Calu3 (cell line): ENCODE measurements at regions of chr12 and their contacts with region 1.

Region 1: GRCh38 chr12:80598004-80598606 is 109.3 kb upstream of the MYF6 start:
- DNase-seq: peak; percentile 56
- H3K4me3 Mint-ChIP-seq: no peak overlapping the region
- H3K27ac Mint-ChIP-seq: no peak overlapping the region
- H3K4me1 Mint-ChIP-seq: no peaks in the 10 kb centered on the region
- H3K27me3 Mint-ChIP-seq: no peaks in the 10 kb centered on the region
- CTCF ChIP-seq: peak; percentile 26

Region 2: GRCh38 chr12:80313209-80313608 is 284.9 kb before region 1 on chr12:
- CTCF ChIA-PET with region 1: no interaction called
- intact Hi-C with region 1: loop called (anchors 10 kb)
- DNase-seq: no peak
- H3K4me3 Mint-ChIP-seq: no peak overlapping the region
- H3K27ac Mint-ChIP-seq: no peak overlapping the region
- H3K4me1 Mint-ChIP-seq: peaks cover 10% of the 10 kb centered on the region
- H3K27me3 Mint-ChIP-seq: no peaks in the 10 kb centered on the region
- CTCF ChIP-seq: no peak

Region 3: DNA sequence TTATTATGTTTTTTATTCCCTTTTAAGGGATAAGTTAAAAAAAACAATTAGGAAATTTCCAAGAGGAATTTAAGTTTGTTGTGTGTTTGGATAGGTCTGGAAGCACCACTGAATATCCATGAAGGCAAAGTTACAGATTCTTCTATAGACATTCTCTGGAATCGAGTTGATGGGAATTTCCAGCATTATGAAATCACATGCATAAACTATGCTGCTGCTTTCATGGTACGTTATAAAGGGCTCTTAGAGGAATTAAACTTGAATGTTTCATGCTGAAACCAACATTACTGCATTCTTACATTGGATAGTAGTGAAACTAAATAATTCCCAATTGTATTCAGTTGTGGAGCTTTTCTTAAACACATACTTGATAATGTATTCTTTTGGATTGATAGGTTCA is 175.6 kb before region 1 on chr12:
- CTCF ChIA-PET with region 1: no interaction called
- intact Hi-C with region 1: loop called (anchors 5 kb)
- DNase-seq: no peak
- H3K4me3 Mint-ChIP-seq: no peak overlapping the region
- H3K27ac Mint-ChIP-seq: no peak overlapping the region
- H3K4me1 Mint-ChIP-seq: no peaks in the 10 kb centered on the region
- H3K27me3 Mint-ChIP-seq: no peaks in the 10 kb centered on the region
- CTCF ChIP-seq: no peak

Region 4: DNA sequence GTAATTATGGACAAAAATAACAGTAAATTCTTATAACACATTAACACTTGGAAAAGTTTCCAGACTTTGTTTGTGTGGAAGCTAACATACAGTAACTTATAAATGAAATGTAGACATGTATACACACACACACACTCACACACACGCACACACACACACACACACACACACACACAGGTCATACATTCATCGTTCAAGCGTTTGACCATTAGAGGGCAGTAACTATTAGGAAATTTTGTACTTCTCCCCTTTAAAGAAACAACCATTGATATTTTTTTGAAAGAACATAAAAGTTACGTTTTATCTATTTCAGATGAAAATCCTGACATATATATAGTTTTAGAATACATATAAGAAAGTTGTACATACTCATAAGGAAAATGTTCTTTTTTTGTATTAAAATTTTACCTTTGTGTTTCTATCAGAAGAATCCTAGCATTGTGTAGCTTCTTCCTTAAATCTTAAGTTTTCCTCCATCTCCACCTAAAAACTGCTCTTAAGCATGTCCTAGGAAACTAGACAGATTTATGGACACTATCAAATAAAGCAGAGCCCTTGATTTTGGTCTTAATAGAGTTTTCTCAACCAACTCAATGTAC is 125.1 kb before region 1 on chr12:
- CTCF ChIA-PET with region 1: interaction called, 5 read pairs
- intact Hi-C with region 1: loop called (anchors 1 kb)
- DNase-seq: peak; percentile 49
- H3K4me3 Mint-ChIP-seq: no peak overlapping the region
- H3K27ac Mint-ChIP-seq: no peak overlapping the region
- H3K4me1 Mint-ChIP-seq: no peaks in the 10 kb centered on the region
- H3K27me3 Mint-ChIP-seq: no peaks in the 10 kb centered on the region
- CTCF ChIP-seq: peak; percentile 30

Region 5: DNA sequence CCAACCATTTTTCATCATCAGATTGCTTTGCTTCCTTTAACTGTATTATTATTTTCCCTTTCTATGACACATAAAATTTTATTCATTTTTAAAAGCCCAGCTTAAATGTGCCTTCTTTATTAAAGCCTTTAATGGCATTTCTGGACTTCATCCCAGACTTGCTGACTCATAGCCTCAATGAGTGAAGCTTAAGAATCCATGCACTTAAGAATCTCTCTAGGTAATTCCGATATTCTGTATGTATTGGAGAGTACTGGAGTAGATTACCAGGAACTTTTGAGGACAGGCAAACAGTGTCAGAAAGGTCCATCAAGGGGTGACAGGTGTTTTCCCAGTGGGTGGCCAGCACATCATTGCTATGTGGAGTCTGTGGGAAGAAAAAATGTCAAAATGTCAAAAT is 46.2 kb before region 1 on chr12:
- CTCF ChIA-PET with region 1: no interaction called
- intact Hi-C with region 1: loop called (anchors 5 kb)
- DNase-seq: peak; percentile 38
- H3K4me3 Mint-ChIP-seq: no peak overlapping the region
- H3K27ac Mint-ChIP-seq: no peak overlapping the region
- H3K4me1 Mint-ChIP-seq: peaks cover 16% of the 10 kb centered on the region
- H3K27me3 Mint-ChIP-seq: no peaks in the 10 kb centered on the region
- CTCF ChIP-seq: no peak

Region 6: GRCh38 chr12:81231574-81232368 is 633.7 kb after region 1 on chr12:
- CTCF ChIA-PET with region 1: no interaction called
- intact Hi-C with region 1: no loop called
- DNase-seq: no peak
- H3K4me3 Mint-ChIP-seq: no peak overlapping the region
- H3K27ac Mint-ChIP-seq: no peak overlapping the region
- H3K4me1 Mint-ChIP-seq: no peaks in the 10 kb centered on the region
- H3K27me3 Mint-ChIP-seq: no peaks in the 10 kb centered on the region
- CTCF ChIP-seq: no peak